PC-3 (cell line): ENCODE measurements at regions of chr11 and their contacts with region 1.

Region 1: GRCh38 chr11:115334932-115335788 is 169.1 kb downstream of the CADM1 start:
- DNase-seq: peak; percentile 63
- ATAC-seq: no peak
- H3K4me3 ChIP-seq: no peak overlapping the region
- H3K27ac ChIP-seq: no peak overlapping the region
- H3K4me1 ChIP-seq: no peaks in the 10 kb centered on the region
- H3K27me3 ChIP-seq: 0 out of 2 replicates have a peak, but pooled peaks cover 3% of the 10 kb centered on the region
- CTCF ChIP-seq: peak; percentile 75

Region 2: GRCh38 chr11:116276051-116277044 is 941.2 kb after region 1 on chr11:
- CTCF ChIA-PET with region 1: no interaction called
- POLR2A ChIA-PET with region 1: no interaction called
- intact Hi-C with region 1: loop called (anchors 2 kb)
- DNase-seq: peak; percentile 67
- ATAC-seq: no peak; the same call in 1 of the 2 replicates
- H3K4me3 ChIP-seq: no peak overlapping the region
- H3K27ac ChIP-seq: no peak overlapping the region
- H3K4me1 ChIP-seq: no peaks in the 10 kb centered on the region
- H3K27me3 ChIP-seq: peaks cover 12% of the 10 kb centered on the region; the same call in 1 of the 2 replicates
- CTCF ChIP-seq: peak; percentile 87

Region 3: DNA sequence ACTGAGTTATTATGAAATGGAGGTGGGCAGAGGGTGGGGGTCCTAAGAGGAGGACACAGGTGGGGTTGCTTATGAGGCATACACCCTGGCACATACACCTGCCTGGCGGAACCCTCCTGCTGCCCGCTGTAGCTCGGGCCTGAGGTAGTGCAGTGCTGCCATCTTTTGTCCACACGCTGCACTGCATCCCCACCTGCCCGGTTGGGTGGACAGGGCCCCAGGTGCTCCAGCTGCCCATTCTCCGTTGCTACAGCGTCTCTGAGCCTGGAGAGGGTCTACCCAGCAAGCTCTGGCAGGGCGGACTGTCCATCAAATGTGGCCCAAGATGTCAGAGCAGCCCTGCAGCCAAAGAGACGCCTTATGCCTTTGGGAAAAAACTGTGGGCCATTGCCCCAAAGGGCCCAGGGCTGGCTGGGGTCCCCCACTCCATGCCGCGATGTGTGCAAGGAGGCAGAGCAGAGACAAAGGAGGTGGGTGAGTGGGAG is 1306.4 kb after region 1 on chr11:
- CTCF ChIA-PET with region 1: no interaction called
- POLR2A ChIA-PET with region 1: no interaction called
- intact Hi-C with region 1: loop called (anchors 5 kb)
- DNase-seq: peak; percentile 80
- ATAC-seq: peak; percentile 92
- H3K4me3 ChIP-seq: no peak overlapping the region
- H3K27ac ChIP-seq: no peak overlapping the region
- H3K4me1 ChIP-seq: no peaks in the 10 kb centered on the region
- H3K27me3 ChIP-seq: peaks cover 39% of the 10 kb centered on the region
- CTCF ChIP-seq: peak; percentile 91

Region 4: DNA sequence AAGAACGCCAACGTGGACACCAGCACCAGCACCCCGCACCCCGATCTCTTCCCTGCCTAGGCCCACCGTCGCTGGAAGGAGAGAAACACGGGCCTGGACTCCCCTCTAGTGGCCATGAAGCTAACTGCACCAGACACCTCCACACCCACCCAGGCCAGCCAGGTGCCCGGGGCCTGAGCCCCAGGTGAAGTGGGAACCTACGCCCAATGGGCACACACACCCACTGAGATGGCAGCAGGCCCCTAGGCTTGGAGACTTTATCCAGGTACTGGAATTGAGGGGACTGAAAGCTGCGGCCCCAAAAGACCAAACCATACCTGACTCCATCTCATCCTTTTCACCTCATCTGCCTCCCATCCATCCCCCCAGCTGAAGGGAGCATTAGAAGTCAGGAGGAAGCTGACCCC is 1356.6 kb after region 1 on chr11:
- CTCF ChIA-PET with region 1: interaction called, 3 read pairs
- POLR2A ChIA-PET with region 1: no interaction called
- intact Hi-C with region 1: loop called (anchors 2 kb)
- DNase-seq: peak; percentile 66
- ATAC-seq: peak; percentile 40
- H3K4me3 ChIP-seq: no peak overlapping the region
- H3K27ac ChIP-seq: no peak overlapping the region
- H3K4me1 ChIP-seq: peaks cover 36% of the 10 kb centered on the region
- H3K27me3 ChIP-seq: no peaks in the 10 kb centered on the region
- CTCF ChIP-seq: peak; percentile 93